T-cell (primary cell): ENCODE measurements at regions of chr7 and their contacts with region 1.

Region 1: DNA sequence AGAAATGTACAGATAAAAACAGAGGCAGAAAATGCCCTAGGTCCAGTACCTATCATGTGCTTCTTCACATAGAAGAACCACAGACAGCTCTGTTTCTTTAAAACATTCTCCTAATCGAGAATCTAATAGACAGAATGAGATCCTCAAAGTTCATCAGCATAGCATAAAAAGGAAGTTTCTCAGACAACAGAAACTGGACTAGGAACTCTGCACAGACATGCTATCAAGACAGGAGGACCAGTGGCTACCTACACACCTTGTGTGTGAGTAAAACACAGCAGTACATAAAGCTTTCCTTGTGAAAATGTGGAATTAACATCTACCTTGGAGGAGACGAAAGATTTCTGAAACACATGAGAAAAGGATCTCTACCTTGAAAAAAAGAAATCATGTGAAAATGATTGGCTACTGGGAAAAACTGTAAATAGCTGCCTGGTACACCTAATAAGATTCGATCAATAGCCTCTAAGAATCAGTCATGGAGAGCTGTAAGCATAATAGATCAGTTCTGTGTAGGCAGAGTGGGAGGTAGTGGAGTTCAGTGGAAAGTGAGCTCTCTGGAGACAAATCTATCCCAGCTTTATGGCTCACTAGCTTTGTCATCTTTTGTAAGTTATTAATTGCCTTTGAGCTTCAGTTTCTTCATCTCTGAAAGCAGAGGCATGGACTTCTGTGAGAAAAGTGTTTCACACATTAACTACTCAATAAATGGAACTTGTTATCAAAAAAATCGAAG is 26.7 kb downstream of the ELAPOR2 start:
- DNase-seq: no peak
- ATAC-seq: no peak
- H3K4me3 ChIP-seq: no peak overlapping the region
- H3K4me3 Mint-ChIP-seq: no peak overlapping the region
- H3K27ac ChIP-seq: no peak overlapping the region
- H3K27ac Mint-ChIP-seq: no peak overlapping the region
- H3K4me1 ChIP-seq: peaks cover 0 to 2% of the 10 kb centered on the region in 2 experiments
- H3K4me1 Mint-ChIP-seq: peaks cover 0 to 10% (median 10%) of the 10 kb centered on the region in 3 donors
- H3K27me3 ChIP-seq: no peaks in the 10 kb centered on the region
- H3K27me3 Mint-ChIP-seq: peaks cover 0 to 16% of the 10 kb centered on the region in 2 donors

Region 2: DNA sequence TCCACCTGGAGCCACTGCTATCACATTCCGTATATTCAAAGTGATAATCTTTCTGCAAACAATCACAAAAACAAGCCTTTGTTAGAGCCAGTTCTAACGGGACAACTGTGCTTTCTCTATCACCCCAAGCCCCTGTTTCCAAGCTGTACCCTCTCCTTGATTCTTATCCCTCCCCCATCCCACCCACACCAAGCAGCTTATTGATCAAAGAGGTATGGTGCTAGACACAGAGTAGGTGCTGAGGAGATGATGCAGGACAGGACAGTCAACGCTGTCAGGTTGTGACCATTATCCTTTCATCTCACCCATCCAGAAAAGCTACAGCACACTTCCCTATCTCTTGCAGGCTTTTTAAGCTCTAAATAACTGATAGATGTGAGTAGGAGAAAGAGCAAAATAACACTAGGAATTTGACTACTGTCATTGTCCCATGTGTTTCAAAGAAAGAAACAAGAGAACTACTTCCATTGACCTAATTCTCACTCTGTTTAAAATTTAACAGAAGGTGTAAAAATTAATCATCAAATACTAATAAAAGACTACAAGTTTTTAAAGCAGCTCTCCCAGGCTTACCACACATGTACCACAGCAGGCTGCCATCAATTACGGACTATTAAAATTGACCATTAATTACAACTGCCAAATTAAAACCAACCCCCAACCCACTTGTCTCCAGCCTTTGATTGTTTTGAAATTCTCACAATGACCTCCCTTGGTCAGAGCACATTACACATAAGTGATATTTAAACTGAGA is 67.6 kb before region 1 on chr7:
- CTCF ChIA-PET with region 1: interaction called in 1 of 2 experiments, 11 read pairs
- POLR2A ChIA-PET with region 1: no interaction called
- DNase-seq: no peak
- ATAC-seq: no peak
- H3K4me3 ChIP-seq: no peak overlapping the region
- H3K4me3 Mint-ChIP-seq: no peak overlapping the region
- H3K27ac ChIP-seq: no peak overlapping the region
- H3K27ac Mint-ChIP-seq: no peak overlapping the region
- H3K4me1 ChIP-seq: peaks cover 0 to 4% of the 10 kb centered on the region in 2 experiments
- H3K4me1 Mint-ChIP-seq: peaks cover 3 to 8% (median 5%) of the 10 kb centered on the region in 3 donors
- H3K27me3 ChIP-seq: peaks cover 0 to 3% of the 10 kb centered on the region in 2 experiments
- H3K27me3 Mint-ChIP-seq: peaks cover 6 to 12% of the 10 kb centered on the region in 2 donors

Region 3: DNA sequence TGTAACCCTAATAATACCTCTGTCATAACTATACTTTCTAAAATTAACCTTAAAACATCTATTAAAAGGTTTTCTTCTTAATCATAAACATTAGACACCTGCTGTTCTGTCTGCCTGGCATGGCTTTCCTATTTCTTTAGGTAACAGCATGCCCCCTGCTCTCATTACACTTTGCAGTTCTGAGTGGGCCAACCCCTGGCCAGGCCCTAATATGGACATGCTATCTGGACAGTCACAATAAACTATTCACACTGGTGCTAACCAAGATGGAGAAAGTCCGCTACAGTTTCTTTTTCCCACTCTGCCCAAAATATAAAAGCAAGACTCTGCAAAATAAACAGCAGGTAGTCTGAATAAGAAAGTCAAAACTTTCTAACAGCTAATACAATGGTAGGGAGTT is 57.3 kb before region 1 on chr7:
- CTCF ChIA-PET with region 1: no interaction called
- POLR2A ChIA-PET with region 1: no interaction called
- DNase-seq: no peak
- ATAC-seq: no peak
- H3K4me3 ChIP-seq: no peak overlapping the region
- H3K4me3 Mint-ChIP-seq: no peak overlapping the region
- H3K27ac ChIP-seq: no peak overlapping the region
- H3K27ac Mint-ChIP-seq: no peak overlapping the region
- H3K4me1 ChIP-seq: peaks cover 10 to 23% of the 10 kb centered on the region in 2 experiments
- H3K4me1 Mint-ChIP-seq: peaks cover 37 to 63% (median 59%) of the 10 kb centered on the region in 3 donors
- H3K27me3 ChIP-seq: no peaks in the 10 kb centered on the region
- H3K27me3 Mint-ChIP-seq: no peaks in the 10 kb centered on the region

Region 4: GRCh38 chr7:87100326-87100725 is 67.6 kb after region 1 on chr7:
- CTCF ChIA-PET with region 1: no interaction called
- POLR2A ChIA-PET with region 1: no interaction called
- DNase-seq: no peak
- ATAC-seq: no peak
- H3K4me3 ChIP-seq: no peak overlapping the region
- H3K4me3 Mint-ChIP-seq: no peak overlapping the region
- H3K27ac ChIP-seq: no peak overlapping the region
- H3K27ac Mint-ChIP-seq: no peak overlapping the region
- H3K4me1 ChIP-seq: no peaks in the 10 kb centered on the region
- H3K4me1 Mint-ChIP-seq: no peaks in the 10 kb centered on the region
- H3K27me3 ChIP-seq: no peaks in the 10 kb centered on the region
- H3K27me3 Mint-ChIP-seq: peaks cover 0 to 11% of the 10 kb centered on the region in 2 donors